ENCODE measurements at regions of chr4 and their contacts with region 1.

Region 1: GRCh38 chr4:3106339-3107186 is 32.1 kb downstream of the HTT start:
- DNase-seq: peak; percentile 89 to 92 (median 89)
- H3K4me3 ChIP-seq: no peak overlapping the region
- H3K27ac ChIP-seq: peak overlapping the region in 1 of 2 experiments; percentile 40
- H3K4me1 ChIP-seq: peaks cover 0 to 13% (median 2%) of the 10 kb centered on the region in 4 experiments
- H3K27me3 ChIP-seq: no peaks in the 10 kb centered on the region

Region 2: GRCh38 chr4:2781921-2782320 is 324.6 kb before region 1 on chr4:
- CTCF ChIA-PET with region 1: no interaction called
- POLR2A ChIA-PET with region 1: no interaction called
- DNase-seq: no peak
- H3K4me3 ChIP-seq: no peak overlapping the region
- H3K27ac ChIP-seq: no peak overlapping the region
- H3K4me1 ChIP-seq: peaks cover 0 to 19% (median 16%) of the 10 kb centered on the region in 4 experiments
- H3K27me3 ChIP-seq: no peaks in the 10 kb centered on the region

Region 3: DNA sequence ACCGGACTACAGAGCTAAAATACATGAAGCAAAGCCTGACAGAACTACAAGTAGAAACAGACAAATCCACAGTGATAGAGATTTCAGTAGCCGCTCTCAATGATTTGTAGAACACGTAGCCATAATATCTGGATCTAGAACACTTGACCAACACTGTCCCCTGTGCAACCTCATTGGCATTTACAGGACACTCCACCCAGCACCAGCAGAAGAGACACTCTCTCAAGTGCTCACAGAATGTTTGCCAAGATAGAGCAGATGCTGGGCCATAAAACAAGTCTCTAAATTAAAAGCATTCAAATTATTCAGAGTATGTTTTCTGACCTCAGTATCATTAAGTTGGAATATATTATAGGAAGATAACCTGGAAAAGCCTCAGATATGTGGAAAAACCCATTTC is 10.4 kb before region 1 on chr4:
- CTCF ChIA-PET with region 1: interaction called, 12 read pairs
- POLR2A ChIA-PET with region 1: no interaction called
- DNase-seq: no peak
- H3K4me3 ChIP-seq: no peak overlapping the region
- H3K27ac ChIP-seq: no peak overlapping the region
- H3K4me1 ChIP-seq: peaks cover 0 to 3% (median 0%) of the 10 kb centered on the region in 4 experiments
- H3K27me3 ChIP-seq: no peaks in the 10 kb centered on the region

Region 4: GRCh38 chr4:3122081-3122563 is 15.6 kb after region 1 on chr4:
- CTCF ChIA-PET with region 1: interaction called, 37 read pairs
- POLR2A ChIA-PET with region 1: interaction called, 4 read pairs
- DNase-seq: peak; percentile 29 to 58 (median 54)
- H3K4me3 ChIP-seq: no peak overlapping the region
- H3K27ac ChIP-seq: peak overlapping the region in 1 of 2 experiments; percentile 40
- H3K4me1 ChIP-seq: peaks cover 0 to 23% (median 14%) of the 10 kb centered on the region in 4 experiments
- H3K27me3 ChIP-seq: no peaks in the 10 kb centered on the region

Region 5: DNA sequence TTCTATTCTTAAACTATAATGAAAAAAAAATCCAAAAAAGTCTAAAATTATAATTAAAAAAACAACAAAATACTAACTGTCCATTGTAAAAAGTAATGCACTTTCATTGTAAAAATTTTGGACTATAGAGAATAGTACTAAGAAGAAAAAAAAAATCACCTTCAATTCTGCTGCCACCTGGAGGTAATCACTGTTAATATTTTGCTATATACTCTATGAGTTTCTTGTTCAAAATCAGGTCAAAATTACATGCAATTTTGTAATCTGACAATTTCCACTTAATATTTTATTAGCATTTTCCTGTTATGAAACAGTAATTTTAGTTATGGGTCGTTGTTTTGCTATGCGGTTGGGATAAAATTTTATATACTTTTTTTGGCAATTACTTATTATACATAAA is 29.9 kb after region 1 on chr4:
- CTCF ChIA-PET with region 1: interaction called, 122 read pairs
- POLR2A ChIA-PET with region 1: no interaction called
- DNase-seq: peak; percentile 25 to 59 (median 56)
- H3K4me3 ChIP-seq: no peak overlapping the region
- H3K27ac ChIP-seq: no peak overlapping the region
- H3K4me1 ChIP-seq: no peaks in the 10 kb centered on the region
- H3K27me3 ChIP-seq: no peaks in the 10 kb centered on the region

Measured in common myeloid progenitor, CD34-positive (primary cell).